Caco-2 (cell line): ENCODE measurements at regions of chr16 and their contacts with region 1.

Region 1: DNA sequence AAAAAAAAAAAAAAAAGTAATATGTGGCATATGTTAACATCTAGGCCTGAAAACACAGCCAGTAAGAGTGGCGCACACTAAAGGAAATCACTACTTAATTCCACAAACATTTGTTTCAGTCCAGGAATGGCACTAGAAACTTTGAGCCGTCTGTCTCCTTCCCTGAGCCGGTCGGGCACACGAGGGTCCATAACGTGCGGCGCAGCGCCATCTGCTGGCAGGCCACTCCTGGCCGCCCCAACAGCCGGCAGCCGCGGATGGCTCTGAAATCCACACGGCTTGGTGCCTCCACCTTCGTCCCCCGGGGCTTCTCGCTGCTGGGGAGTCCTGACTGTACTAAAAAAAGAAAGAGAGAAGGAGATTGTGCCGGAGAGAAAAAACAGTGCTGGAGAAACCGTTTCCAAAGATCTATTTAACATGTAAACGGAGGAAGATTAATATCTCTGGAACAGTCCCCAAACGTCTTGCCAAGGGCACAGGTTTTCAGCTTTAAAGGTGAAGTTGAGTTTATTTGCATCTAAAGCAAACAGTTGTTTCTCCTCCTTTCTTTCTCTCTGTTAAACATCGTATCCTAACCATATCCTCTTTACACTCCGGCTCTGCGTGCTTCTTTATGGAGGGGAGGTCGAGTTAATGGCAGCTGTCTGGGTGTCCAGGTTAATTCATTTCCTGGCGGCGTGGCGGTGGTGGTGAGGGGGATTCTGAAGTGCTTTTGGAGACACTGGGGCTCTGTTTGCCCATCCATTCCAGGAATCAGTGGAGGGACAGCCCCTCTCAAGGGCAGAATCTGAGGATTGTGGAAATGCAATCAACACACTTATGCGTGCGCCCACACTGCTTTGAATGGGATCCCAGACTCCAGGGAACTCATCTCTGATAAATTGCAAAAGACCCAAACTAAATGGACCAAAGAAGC is 611.3 kb upstream of the SALL1 start:
- DNase-seq: peak; percentile 66 to 82
- H3K4me3 ChIP-seq: no peak overlapping the region
- H3K4me3 Mint-ChIP-seq: no peak overlapping the region
- H3K27ac Mint-ChIP-seq: no peak overlapping the region
- H3K4me1 ChIP-seq: no peaks in the 10 kb centered on the region
- H3K4me1 Mint-ChIP-seq: peaks cover 12% of the 10 kb centered on the region
- H3K27me3 ChIP-seq: no peaks in the 10 kb centered on the region
- H3K27me3 Mint-ChIP-seq: peaks cover 20% of the 10 kb centered on the region
- CTCF ChIP-seq: peak; percentile 93 to 95

Region 2: DNA sequence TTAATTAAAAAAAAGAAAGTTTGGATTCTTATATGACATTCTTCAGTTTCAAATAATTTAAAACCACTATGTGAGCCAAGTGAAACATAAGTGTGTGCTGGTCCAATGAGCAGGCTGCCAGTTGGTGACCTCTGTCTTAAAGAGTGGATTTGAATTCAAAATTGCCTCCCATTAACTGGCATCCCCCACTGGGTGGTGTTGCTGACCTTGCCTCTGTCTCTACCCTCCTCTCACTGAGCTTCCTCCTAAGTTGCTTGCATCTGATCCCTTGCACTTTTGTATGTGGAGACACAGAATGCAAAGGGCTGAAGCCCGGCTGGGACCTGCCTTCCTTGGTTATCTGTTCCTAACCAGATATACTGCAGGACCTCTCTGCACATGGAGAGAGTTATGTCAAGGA is 859.9 kb before region 1 on chr16:
- CTCF ChIA-PET with region 1: no interaction called
- POLR2A ChIA-PET with region 1: no interaction called
- intact Hi-C with region 1: loop called (anchors 2 kb)
- DNase-seq: no peak
- H3K4me3 ChIP-seq: no peak overlapping the region
- H3K4me3 Mint-ChIP-seq: no peak overlapping the region
- H3K27ac Mint-ChIP-seq: no peak overlapping the region
- H3K4me1 ChIP-seq: no peaks in the 10 kb centered on the region
- H3K4me1 Mint-ChIP-seq: no peaks in the 10 kb centered on the region
- H3K27me3 ChIP-seq: no peaks in the 10 kb centered on the region; the same call in none of the 2 replicates
- H3K27me3 Mint-ChIP-seq: peaks cover 11% of the 10 kb centered on the region
- CTCF ChIP-seq: peak in 1 of 2 experiments; percentile 21

Region 3: GRCh38 chr16:51146256-51146924 is 615.9 kb before region 1 on chr16:
- CTCF ChIA-PET with region 1: no interaction called
- POLR2A ChIA-PET with region 1: no interaction called
- intact Hi-C with region 1: loop called (anchors 1 kb)
- DNase-seq: no peak
- H3K4me3 ChIP-seq: no peak overlapping the region
- H3K4me3 Mint-ChIP-seq: no peak overlapping the region
- H3K27ac Mint-ChIP-seq: no peak overlapping the region
- H3K4me1 ChIP-seq: no peaks in the 10 kb centered on the region
- H3K4me1 Mint-ChIP-seq: no peaks in the 10 kb centered on the region
- H3K27me3 ChIP-seq: no peaks in the 10 kb centered on the region; the same call in 1 of the 2 replicates
- H3K27me3 Mint-ChIP-seq: no peaks in the 10 kb centered on the region
- CTCF ChIP-seq: peak in 1 of 2 experiments; percentile 27

Region 4: DNA sequence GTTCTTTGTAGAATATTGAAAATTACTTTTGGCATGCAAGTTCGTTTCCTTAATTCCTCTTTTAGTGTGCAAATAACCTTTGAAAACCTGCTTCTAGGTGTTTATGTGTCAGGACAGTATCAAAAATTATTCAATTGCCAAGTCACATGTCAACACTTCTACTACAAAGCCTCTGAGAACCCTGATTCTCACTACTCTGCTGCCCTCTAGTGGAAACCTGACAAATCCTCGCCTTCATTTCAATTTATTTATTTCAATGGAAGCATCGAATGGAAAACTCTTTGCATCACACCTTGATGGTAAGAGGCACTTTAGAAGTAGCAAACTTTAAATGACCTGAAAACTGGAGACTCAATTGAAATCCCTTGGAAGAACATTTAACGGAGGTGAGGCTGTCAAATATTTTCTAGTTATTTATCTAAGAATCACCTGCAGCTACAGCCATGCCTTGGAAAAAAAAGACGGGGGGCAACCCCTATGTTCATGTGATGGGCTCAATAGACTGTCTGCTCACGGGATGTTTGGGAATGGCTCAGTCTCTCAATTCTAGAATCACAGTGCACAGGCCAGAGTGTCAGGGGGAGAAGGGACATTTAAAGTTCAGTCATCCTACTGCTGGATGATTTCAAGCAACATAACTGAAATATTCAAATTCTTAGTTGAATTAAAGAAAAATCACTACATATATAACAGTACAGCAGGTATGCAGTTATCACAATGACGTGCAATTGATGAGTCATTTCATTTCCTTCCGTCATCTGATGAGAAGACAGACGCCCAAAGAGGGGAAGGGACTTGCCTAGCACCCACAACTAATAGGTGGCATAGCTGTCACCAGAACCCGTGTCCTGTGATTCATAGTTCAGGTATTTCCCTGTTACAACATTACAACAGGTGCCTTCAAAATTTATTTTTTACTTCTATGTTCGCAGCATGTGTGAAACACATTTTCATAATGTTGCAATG is 220.7 kb after region 1 on chr16:
- CTCF ChIA-PET with region 1: no interaction called
- POLR2A ChIA-PET with region 1: no interaction called
- intact Hi-C with region 1: loop called (anchors 1 kb)
- DNase-seq: peak; percentile 38 to 76
- H3K4me3 ChIP-seq: no peak overlapping the region
- H3K4me3 Mint-ChIP-seq: no peak overlapping the region
- H3K27ac Mint-ChIP-seq: no peak overlapping the region
- H3K4me1 ChIP-seq: no peaks in the 10 kb centered on the region
- H3K4me1 Mint-ChIP-seq: no peaks in the 10 kb centered on the region
- H3K27me3 ChIP-seq: no peaks in the 10 kb centered on the region; the same call in 1 of the 2 replicates
- H3K27me3 Mint-ChIP-seq: peaks cover 5% of the 10 kb centered on the region
- CTCF ChIP-seq: peak; percentile 71 to 82